Breast epithelium (tissue), 4 donors: ENCODE measurements at regions of chr6 and their contacts with region 1.

Region 1: DNA sequence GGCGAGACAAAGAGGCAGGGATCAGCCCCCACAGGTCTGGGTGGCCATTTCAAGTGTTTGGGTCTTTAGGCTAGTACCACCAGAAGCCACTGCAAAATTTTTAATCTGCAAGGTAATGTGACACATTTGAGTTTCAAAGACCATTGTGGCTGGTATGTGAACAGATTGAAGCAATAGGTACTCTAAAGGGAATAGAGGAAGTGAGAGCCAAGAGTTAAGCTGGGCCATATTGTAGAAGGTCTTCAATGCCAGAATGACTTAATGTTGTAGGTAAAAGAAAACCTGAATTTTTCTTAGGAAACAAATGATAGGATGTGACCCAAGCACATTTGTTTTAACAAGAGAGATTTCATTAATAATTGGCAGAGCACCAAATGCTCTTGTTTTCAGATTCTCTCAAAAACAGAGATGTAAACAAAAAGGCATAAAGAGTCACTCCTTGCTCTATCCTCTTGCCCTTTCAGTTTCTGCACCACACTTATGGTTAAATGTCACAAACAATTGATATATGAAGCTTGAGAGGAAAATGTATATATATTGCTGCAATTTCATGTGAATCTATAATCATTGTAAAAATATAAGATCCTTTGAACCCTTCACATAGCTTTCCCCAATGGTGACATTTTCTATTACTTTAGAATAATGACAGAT is 307.1 kb upstream of the PLN start:
- DNase-seq: no peak
- H3K4me3 ChIP-seq: no peak overlapping the region
- H3K27ac ChIP-seq: no peak overlapping the region
- H3K4me1 ChIP-seq: no peaks in the 10 kb centered on the region
- H3K27me3 ChIP-seq: no peaks in the 10 kb centered on the region
- CTCF ChIP-seq: no peak
- POLR2A ChIP-seq: no peak

Region 2: GRCh38 chr6:118187568-118188164 is 53.3 kb before region 1 on chr6:
- intact Hi-C with region 1: loop called (anchors 2 kb)
- DNase-seq: no peak
- H3K4me3 ChIP-seq: peak overlapping the region in 1 of 3 donors; percentile 2
- H3K27ac ChIP-seq: no peak overlapping the region
- H3K4me1 ChIP-seq: no peaks in the 10 kb centered on the region
- H3K27me3 ChIP-seq: no peaks in the 10 kb centered on the region
- CTCF ChIP-seq: no peak
- POLR2A ChIP-seq: no peak